ENCODE measurements at regions of chr10 and their contacts with region 1.

Region 1: GRCh38 chr10:79374312-79375191 is 27.3 kb downstream of the PPIF start:
- DNase-seq: peak; percentile 88
- H3K27ac ChIP-seq: no peak overlapping the region
- CTCF ChIP-seq: peak; percentile 94

Region 2: DNA sequence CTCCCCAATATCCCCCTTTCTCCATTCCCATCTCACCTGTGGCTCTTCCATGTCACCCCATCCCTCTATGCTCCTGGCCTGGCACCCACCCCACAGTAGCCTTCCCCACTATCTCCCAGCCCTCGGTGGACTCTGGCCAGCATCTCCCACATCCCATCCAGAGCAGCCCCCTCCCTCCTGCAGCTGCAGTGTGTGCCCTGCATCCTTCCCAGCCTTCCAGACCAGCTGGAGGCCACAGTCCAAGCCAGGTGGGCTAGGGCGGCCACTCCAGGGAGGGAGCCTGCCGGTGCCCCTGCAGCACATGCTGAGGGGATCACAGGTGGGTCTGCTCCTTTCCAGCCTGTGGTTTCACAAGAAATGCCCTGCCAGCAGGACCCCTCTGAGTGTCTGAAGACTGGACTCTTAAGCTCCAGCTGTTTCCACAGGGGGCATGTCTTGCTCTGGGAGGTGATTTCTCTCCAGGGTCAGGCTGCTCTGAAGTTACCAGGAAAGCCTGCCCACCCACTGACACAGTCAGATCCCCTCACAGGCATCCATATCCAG is 118.2 kb before region 1 on chr10:
- CTCF ChIA-PET with region 1: interaction called, 10 read pairs
- POLR2A ChIA-PET with region 1: no interaction called
- DNase-seq: no peak
- H3K27ac ChIP-seq: no peak overlapping the region
- CTCF ChIP-seq: no peak

Region 3: GRCh38 chr10:79331709-79332108 is 42.8 kb before region 1 on chr10:
- CTCF ChIA-PET with region 1: no interaction called
- POLR2A ChIA-PET with region 1: no interaction called
- DNase-seq: peak; percentile 46
- H3K27ac ChIP-seq: no peak overlapping the region
- CTCF ChIP-seq: no peak

Region 4: GRCh38 chr10:79355420-79356022 is 19.0 kb before region 1 on chr10:
- CTCF ChIA-PET with region 1: no interaction called
- POLR2A ChIA-PET with region 1: no interaction called
- DNase-seq: no peak
- H3K27ac ChIP-seq: no peak overlapping the region
- CTCF ChIP-seq: no peak

Region 5: DNA sequence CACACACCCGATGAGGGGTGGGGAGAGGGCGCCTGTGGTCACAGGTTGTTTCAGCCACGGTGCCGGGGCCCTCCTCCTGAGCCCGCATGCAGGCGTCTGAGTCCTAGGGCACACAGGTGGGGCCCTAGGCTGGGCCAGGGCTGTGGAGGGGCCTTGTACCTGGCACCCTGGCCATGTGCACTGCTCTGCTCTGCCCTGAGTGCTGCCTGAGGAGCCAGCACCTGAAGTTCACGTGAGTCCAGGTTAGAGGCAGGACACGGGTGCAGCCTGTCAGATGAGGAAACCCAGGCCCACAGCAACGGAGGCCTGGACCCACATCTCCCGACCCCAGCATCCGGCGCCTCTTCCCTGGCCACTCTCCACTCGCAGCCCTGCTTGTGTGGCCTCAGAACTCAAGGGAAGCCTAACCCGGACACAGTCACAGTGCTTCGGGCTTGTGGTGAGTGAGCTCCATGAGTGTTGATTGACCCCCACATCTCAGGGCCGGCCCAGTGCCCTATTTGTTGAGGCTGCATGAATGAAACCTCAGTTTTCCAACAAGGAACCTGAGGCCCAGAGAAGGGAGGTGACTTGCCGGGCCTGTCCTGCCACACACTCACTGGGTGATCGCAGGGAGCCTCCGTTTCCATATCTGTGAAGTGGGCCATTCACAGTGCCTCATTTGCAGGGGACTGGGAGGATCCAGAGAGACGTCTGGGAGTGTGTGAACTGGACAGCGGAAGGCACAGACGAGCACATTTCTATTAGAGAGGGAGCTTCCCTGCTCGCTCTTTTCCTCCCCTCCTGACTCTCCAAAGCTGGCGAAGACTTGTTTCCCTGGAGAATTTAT is 12.3 kb after region 1 on chr10:
- CTCF ChIA-PET with region 1: interaction called, 11 read pairs
- POLR2A ChIA-PET with region 1: no interaction called
- DNase-seq: no peak
- H3K27ac ChIP-seq: no peak overlapping the region
- CTCF ChIP-seq: no peak

Region 6: GRCh38 chr10:79438021-79438698 is 63.6 kb after region 1 on chr10:
- CTCF ChIA-PET with region 1: no interaction called
- POLR2A ChIA-PET with region 1: no interaction called
- DNase-seq: no peak
- H3K27ac ChIP-seq: peak overlapping the region; percentile 7; the same call in 1 of the 2 replicates
- CTCF ChIP-seq: no peak

Region 7: GRCh38 chr10:79468024-79468560 is 93.5 kb after region 1 on chr10:
- CTCF ChIA-PET with region 1: interaction called, 10 read pairs
- POLR2A ChIA-PET with region 1: no interaction called
- DNase-seq: no peak
- H3K27ac ChIP-seq: no peak overlapping the region
- CTCF ChIP-seq: no peak

Region 8: DNA sequence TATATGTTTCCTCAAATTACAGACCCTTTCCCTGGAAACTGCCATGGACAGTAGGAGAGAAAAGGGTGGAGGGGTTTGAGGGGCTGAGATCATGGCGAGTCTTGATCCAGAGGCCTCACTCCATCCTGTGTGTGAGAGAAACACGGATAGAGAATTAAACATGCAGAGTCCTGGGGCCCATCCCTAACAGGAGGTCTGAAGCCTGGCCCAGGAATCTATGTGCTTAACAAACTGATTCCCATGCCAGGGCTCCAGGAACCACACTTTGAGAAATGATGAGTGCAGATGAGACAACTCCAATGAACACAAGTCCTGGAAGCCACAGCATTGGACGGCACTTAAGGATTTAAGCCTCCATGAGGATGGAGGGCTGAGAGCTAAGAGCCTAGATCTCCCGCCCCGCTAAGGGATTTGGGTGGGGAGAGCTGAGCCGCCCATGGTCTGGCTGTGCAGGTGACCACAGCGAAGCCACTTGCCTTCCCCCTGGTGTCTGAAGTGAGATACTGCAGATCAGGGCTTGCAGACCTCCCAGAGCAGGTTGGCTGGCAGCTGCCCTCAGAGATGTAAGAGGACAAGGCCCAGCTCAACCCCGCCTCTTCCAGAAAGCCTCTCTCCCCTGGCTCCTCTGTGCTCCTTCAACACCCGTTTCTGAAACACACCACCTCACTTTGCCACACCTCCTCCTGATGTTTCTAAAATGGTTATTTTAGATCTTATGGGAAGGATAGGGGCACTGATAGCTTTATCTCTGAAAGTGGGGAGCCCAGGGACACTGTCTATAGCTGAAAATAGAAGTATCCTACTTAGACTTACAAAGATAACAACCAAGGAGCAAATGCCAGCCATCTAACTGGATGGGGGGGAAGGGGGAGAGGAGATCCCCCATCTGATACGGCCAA is 113.0 kb after region 1 on chr10:
- CTCF ChIA-PET with region 1: interaction called, 11 read pairs
- POLR2A ChIA-PET with region 1: no interaction called
- DNase-seq: peak; percentile 25
- H3K27ac ChIP-seq: peak overlapping the region; percentile 53
- CTCF ChIP-seq: no peak

Region 9: DNA sequence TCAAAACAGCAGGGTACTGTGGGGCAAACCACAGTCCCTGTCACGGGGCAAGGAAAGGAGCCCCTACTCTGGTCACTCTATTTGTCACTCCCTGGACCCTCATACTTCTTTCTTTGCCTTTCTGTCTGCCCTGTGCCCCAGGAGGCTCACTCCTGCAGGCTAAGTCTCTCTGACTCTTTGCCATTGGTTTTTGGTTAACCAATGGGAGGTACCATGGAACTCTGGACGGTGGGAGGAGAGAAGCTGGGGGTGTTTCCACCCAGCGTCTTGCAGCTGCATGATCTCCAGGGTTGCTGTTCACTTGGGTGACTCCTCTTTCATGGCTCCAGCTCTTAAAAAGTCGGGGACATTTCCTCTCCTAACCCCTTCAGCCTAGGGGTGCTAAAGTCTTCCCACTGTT is 122.3 kb after region 1 on chr10:
- CTCF ChIA-PET with region 1: interaction called, 20 read pairs
- POLR2A ChIA-PET with region 1: no interaction called
- DNase-seq: no peak
- H3K27ac ChIP-seq: no peak overlapping the region
- CTCF ChIP-seq: no peak

Region 10: DNA sequence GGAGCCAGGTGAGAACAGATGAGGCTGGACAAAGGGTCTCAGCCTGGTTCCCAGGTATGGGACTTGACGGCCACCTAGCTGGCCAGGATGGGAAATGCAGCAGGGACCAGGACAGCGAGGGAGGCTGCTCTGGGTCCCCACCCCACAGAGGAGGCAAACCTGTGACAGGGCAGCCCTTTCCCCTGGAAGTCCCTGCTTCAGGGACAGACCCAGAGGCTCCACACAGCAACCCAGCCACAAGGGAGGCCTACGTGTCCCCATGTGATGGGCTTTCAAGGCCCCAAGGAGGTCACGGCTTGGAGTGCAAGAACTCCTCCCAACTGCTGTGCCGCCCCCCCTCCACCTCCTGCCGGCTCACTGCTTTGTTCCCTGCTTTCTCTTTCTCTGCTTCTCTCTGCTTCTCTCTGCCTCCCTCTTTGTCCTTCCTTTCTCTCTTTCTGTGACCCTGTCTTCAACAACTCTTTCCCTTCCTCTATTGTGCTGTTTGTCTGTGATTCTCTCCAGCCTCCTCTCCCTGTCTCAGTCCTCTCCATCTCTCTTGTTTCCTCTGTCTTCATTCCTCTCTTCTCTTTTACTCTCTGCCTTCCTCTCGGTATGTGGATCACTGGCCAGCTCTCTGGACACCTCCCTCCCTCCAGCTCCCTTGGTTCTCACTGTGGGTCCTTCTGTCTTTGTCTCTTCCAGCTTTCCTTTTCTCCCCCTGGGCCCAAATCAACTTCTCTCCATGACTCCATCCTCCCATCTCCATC is 128.2 kb after region 1 on chr10:
- CTCF ChIA-PET with region 1: interaction called, 20 read pairs
- POLR2A ChIA-PET with region 1: no interaction called
- DNase-seq: no peak
- H3K27ac ChIP-seq: no peak overlapping the region
- CTCF ChIP-seq: peak; percentile 51